ENCODE measurements at regions of chr10 and their contacts with region 1.

Region 1: GRCh38 chr10:66941491-66941890 is 15.7 kb downstream of the LRRTM3 start:
- DNase-seq: no peak
- H3K4me3 ChIP-seq: no peak overlapping the region
- H3K27ac ChIP-seq: no peak overlapping the region
- H3K4me1 ChIP-seq: no peaks in the 10 kb centered on the region
- H3K27me3 ChIP-seq: no peaks in the 10 kb centered on the region
- CTCF ChIP-seq: no peak
- POLR2A ChIP-seq: no peak

Region 2: DNA sequence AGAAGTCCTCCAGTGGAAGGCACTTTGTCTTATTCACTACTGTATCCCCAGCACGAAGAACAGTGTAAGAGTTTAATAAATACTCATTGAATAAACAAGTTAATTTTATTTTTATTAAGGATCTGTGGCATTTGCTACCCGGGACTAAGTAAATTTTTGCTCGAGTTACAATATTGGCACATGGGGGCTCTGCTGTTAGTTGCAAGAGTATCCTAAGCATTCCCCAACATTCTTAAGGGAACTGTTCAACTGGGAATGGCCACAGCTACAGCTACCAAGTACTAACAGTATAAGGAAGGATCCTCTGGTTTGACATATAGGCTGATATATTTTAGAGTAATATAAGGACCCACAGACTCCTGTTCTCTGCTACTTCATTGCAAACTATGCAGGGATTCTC is 24.4 kb before region 1 on chr10:
- intact Hi-C with region 1: no loop called
- DNase-seq: no peak
- H3K4me3 ChIP-seq: no peak overlapping the region
- H3K27ac ChIP-seq: no peak overlapping the region
- H3K4me1 ChIP-seq: no peaks in the 10 kb centered on the region
- H3K27me3 ChIP-seq: no peaks in the 10 kb centered on the region
- CTCF ChIP-seq: no peak
- POLR2A ChIP-seq: no peak

Region 3: DNA sequence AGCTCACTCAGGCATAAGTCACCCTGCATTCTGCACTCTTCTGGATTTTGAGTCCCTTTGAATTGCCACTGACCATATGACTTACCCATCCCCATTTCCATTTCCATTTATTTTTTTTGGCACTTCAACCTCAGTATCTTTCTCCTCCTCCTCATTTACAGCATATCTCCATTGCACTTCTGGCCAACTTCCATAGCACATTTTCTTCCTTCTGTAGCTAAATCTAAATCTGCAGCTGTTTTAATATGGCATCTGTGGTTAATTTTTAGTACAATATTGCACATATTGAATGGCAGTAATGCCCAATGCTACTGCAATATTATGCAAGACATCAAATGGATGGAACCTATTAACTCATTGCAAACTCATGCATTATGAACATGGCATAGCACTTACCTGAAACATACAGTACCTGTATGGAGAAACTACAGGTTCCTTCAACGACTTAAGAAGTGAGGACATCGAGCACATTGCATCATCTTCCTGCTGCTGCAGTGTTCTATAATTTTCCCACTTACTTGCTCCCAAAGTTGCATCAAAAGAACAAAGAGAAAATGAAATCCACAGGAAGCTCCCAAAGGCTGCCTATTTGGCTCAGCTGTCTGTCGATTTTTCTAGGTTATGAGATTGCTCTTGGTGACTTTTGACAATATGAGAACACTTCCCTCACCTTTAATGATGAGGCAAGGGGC is 40.0 kb after region 1 on chr10:
- intact Hi-C with region 1: loop called (anchors 1 kb)
- DNase-seq: no peak
- H3K4me3 ChIP-seq: no peak overlapping the region
- H3K27ac ChIP-seq: no peak overlapping the region
- H3K4me1 ChIP-seq: no peaks in the 10 kb centered on the region
- H3K27me3 ChIP-seq: no peaks in the 10 kb centered on the region
- CTCF ChIP-seq: no peak
- POLR2A ChIP-seq: no peak

Region 4: GRCh38 chr10:68010426-68010940 is 1069.0 kb after region 1 on chr10:
- intact Hi-C with region 1: no loop called
- DNase-seq: no peak
- H3K4me3 ChIP-seq: no peak overlapping the region
- H3K27ac ChIP-seq: no peak overlapping the region
- H3K4me1 ChIP-seq: no peaks in the 10 kb centered on the region
- H3K27me3 ChIP-seq: no peaks in the 10 kb centered on the region
- CTCF ChIP-seq: no peak
- POLR2A ChIP-seq: no peak